Prostate gland (tissue), 2 donors: ENCODE measurements at regions of chr1 and their contacts with region 1.

Region 1: GRCh38 chr1:59296358-59297256 is at the start of gene FGGY:
- DNase-seq: peak; percentile 97
- H3K4me3 ChIP-seq: peak within 1 kb of the TSS; percentile 34 to 48
- H3K27ac ChIP-seq: peak within 1 kb of the TSS; percentile 89 to 91
- H3K4me1 ChIP-seq: no peaks in the 10 kb centered on the region
- H3K27me3 ChIP-seq: no peaks in the 10 kb centered on the region
- CTCF ChIP-seq: peak in 1 of 4 experiments; percentile 9
- POLR2A ChIP-seq: peak; percentile 84
- total RNA-seq, gene FGGY: 28.6 to 32.2 TPM

Region 2: DNA sequence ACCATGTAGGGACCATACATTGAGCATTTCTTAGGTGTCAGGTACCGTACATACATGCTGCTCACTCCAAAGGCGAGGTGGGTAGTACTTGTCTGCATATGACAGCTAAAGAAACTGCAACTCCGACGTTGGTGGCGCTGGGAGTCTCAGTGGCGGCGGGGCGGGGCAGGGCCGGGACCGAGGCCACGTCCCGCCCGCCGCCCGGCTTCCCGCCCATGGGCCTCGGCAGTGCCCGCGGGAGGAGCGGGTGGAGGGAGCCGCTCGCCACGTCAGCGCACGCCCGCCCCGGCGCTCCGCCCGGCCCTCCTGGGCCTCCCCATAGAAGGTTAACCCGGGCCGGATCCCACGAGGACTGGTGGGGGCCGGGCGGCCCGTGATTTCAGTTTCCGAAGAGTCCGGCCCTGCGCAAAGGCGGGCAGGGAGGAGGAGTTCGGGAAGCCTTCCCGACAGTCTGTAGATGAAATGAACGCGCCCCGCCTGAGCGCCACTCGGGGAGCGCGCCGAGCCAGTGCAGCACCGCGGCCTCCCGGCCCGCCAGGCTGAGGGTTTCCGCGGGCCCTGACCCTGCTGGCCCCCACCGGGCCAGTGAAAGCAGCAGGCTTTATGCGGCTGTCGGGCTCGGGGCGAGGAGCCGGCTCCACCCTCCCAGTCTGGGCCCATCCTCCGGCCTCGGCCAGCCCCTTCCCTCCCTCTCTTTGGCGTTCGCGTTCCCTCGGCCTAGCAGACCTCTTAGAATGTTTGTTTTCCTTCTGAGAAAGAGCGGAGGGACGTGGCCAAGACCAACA is 392.9 kb before region 1 on chr1:
- intact Hi-C with region 1: loop called (anchors 10 kb)
- DNase-seq: peak; percentile 90
- H3K4me3 ChIP-seq: peak overlapping the region; percentile 38 to 49
- H3K27ac ChIP-seq: peak overlapping the region; percentile 94 to 97
- H3K4me1 ChIP-seq: no peaks in the 10 kb centered on the region
- H3K27me3 ChIP-seq: no peaks in the 10 kb centered on the region
- CTCF ChIP-seq: peak in 1 of 4 experiments; percentile 9
- POLR2A ChIP-seq: peak; percentile 87

Region 3: GRCh38 chr1:59146651-59147358 is 149.8 kb before region 1 on chr1:
- intact Hi-C with region 1: loop called (anchors 5 kb)
- DNase-seq: no peak
- H3K4me3 ChIP-seq: peak overlapping the region; percentile 23 to 36
- H3K27ac ChIP-seq: peak overlapping the region; percentile 20 to 55
- H3K4me1 ChIP-seq: peaks cover 2% of the 10 kb centered on the region
- H3K27me3 ChIP-seq: no peaks in the 10 kb centered on the region
- CTCF ChIP-seq: no peak
- POLR2A ChIP-seq: peak; percentile 8

Region 4: GRCh38 chr1:59498640-59499039 is 202.0 kb after region 1 on chr1:
- intact Hi-C with region 1: loop called (anchors 5 kb)
- DNase-seq: no peak
- H3K4me3 ChIP-seq: no peak overlapping the region
- H3K27ac ChIP-seq: no peak overlapping the region
- H3K4me1 ChIP-seq: no peaks in the 10 kb centered on the region
- H3K27me3 ChIP-seq: no peaks in the 10 kb centered on the region
- CTCF ChIP-seq: no peak
- POLR2A ChIP-seq: no peak

Region 5: GRCh38 chr1:59596441-59596861 is 299.8 kb after region 1 on chr1:
- intact Hi-C with region 1: loop called (anchors 5 kb)
- DNase-seq: peak; percentile 27
- H3K4me3 ChIP-seq: no peak overlapping the region
- H3K27ac ChIP-seq: peak overlapping the region; percentile 66 to 71
- H3K4me1 ChIP-seq: peaks cover 22% of the 10 kb centered on the region
- H3K27me3 ChIP-seq: no peaks in the 10 kb centered on the region
- CTCF ChIP-seq: no peak
- POLR2A ChIP-seq: no peak

Region 6: GRCh38 chr1:59699227-59699847 is 402.7 kb after region 1 on chr1:
- intact Hi-C with region 1: loop called (anchors 2 kb)
- DNase-seq: no peak
- H3K4me3 ChIP-seq: no peak overlapping the region
- H3K27ac ChIP-seq: peak overlapping the region; percentile 58 to 64
- H3K4me1 ChIP-seq: no peaks in the 10 kb centered on the region
- H3K27me3 ChIP-seq: no peaks in the 10 kb centered on the region
- CTCF ChIP-seq: peak; percentile 90 to 94 (median 92)
- POLR2A ChIP-seq: no peak